ENCODE measurements at regions of chr6 and their contacts with region 1.

Region 1: DNA sequence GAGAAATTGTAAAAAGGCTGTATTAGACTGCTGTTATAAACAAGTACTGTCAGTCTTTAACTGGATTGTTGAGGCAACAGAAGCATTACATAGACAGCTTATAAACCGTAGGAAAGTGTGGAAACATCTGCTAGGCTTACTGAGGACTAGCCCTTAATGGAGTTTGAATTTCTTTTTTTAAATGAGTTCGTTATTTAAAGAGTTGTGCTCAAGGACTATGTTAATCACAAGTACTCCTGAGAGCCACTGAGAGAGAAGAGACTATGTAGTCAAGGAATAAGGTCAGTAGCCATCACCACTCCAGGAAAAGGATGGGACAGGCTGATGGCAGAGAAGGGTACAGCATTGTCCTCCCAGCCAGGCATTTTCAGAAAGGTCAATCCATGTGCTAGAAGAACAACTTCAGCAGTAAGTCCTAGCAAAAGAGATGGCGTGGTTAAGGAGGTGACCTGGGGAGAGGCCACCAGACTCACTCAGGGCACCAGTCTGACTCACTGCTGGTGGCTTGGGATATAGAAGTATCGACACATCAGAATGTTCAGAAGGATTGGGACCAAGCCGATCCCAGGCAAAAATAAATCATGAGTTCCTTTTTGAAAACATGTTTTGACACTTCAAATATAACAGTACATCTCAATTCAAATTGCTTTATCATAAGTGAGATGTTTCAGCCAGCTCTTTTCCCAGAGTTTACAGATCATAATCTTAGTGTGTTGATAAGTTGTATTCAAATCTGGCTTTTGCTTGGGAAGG is 6.4 kb downstream of the RPS12 start:
- DNase-seq: no peak
- H3K4me3 ChIP-seq: no peak overlapping the region
- H3K27ac ChIP-seq: peak overlapping the region; percentile 89
- H3K4me1 ChIP-seq: peaks cover 31% of the 10 kb centered on the region
- H3K27me3 ChIP-seq: no peaks in the 10 kb centered on the region
- CTCF ChIP-seq: no peak

Region 2: GRCh38 chr6:132279592-132280139 is 541.1 kb before region 1 on chr6:
- CTCF ChIA-PET with region 1: no interaction called
- POLR2A ChIA-PET with region 1: no interaction called
- intact Hi-C with region 1: loop called (anchors 2 kb)
- DNase-seq: peak; percentile 55 to 67
- H3K4me3 ChIP-seq: peak overlapping the region; percentile 56
- H3K27ac ChIP-seq: no peak overlapping the region
- H3K4me1 ChIP-seq: 0 out of 2 replicates have a peak, but pooled peaks cover 3% of the 10 kb centered on the region
- H3K27me3 ChIP-seq: no peaks in the 10 kb centered on the region
- CTCF ChIP-seq: peak; percentile 100

Region 3: DNA sequence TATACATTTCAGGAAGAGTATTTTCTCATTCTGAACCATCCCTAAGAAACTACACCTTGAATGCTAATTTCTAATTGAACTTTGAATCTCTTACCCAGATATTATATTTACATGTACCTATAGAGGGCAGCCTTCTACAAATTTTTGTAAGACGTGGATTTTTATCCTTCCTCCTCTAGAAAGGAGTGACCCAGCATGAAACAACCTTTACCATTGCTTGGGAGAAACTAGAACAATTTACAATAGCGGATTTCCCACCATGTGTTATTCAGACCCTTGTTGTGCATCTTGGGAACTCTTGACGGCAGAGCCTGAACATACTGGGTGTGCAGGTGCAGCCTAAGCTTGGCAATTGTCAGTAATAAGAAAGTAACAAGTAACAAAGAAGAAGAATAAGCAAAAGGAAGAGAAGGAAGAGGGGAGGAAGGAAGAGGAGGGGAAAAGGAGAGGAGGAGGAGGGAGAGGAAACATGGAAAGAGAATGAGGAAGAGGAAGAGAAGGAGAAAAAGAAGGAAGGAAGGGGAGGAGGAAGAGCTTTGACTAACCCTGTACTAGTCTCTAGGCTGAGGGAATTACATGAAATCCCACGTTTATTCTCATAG is 151.0 kb before region 1 on chr6:
- CTCF ChIA-PET with region 1: interaction called, 4 read pairs
- POLR2A ChIA-PET with region 1: interaction called, 4 read pairs
- intact Hi-C with region 1: loop called (anchors 2 kb)
- DNase-seq: peak; percentile 19 to 63
- H3K4me3 ChIP-seq: no peak overlapping the region
- H3K27ac ChIP-seq: no peak overlapping the region
- H3K4me1 ChIP-seq: peaks cover 28% of the 10 kb centered on the region
- H3K27me3 ChIP-seq: no peaks in the 10 kb centered on the region
- CTCF ChIP-seq: peak; percentile 84

Region 4: GRCh38 chr6:133512410-133513016 is 691.7 kb after region 1 on chr6:
- CTCF ChIA-PET with region 1: no interaction called
- POLR2A ChIA-PET with region 1: no interaction called
- intact Hi-C with region 1: loop called (anchors 2 kb)
- DNase-seq: peak in 1 of 2 experiments; percentile 45
- H3K4me3 ChIP-seq: no peak overlapping the region
- H3K27ac ChIP-seq: no peak overlapping the region
- H3K4me1 ChIP-seq: no peaks in the 10 kb centered on the region
- H3K27me3 ChIP-seq: no peaks in the 10 kb centered on the region
- CTCF ChIP-seq: peak; percentile 93

Region 5: DNA sequence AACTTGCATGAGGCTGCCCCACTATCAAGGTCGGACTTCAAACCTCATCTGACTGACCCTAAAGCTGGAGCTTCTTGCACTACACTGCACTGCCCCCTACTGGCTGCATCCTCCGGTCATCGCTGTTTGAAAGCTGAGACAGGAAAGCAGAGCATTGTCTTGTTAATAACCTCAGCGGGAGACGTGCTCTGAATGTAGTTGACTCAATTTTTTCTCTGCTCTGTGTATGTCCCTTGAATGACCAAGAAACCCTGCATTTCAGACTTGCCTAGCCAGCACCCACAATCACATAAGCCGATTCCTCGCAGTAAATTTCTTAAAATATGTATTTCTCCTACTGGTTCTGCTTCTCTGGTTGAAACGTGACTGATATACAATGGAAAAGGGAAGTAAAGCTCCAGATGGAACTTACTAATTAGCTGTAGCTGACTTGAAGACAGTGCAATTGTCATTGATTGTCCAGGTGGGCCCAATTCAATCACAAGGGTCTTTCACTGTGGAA is 1095.9 kb after region 1 on chr6:
- CTCF ChIA-PET with region 1: interaction called, 13 read pairs
- POLR2A ChIA-PET with region 1: no interaction called
- intact Hi-C with region 1: no loop called
- DNase-seq: peak; percentile 71 to 82
- H3K4me3 ChIP-seq: peak overlapping the region; percentile 6; the same call in 1 of the 2 replicates
- H3K27ac ChIP-seq: no peak overlapping the region
- H3K4me1 ChIP-seq: no peaks in the 10 kb centered on the region
- H3K27me3 ChIP-seq: no peaks in the 10 kb centered on the region
- CTCF ChIP-seq: peak; percentile 100

Measured in PC-9 (cell line).